Activated CD4-positive, alpha-beta T cell treated with anti-CD3 and anti-CD28 coated beads, Interleukin-2, amount 10 ng/mL, durations not matched to agents 24 days and 14 days (primary cell): ENCODE measurements at regions of chr10 and their contacts with region 1.

Region 1: DNA sequence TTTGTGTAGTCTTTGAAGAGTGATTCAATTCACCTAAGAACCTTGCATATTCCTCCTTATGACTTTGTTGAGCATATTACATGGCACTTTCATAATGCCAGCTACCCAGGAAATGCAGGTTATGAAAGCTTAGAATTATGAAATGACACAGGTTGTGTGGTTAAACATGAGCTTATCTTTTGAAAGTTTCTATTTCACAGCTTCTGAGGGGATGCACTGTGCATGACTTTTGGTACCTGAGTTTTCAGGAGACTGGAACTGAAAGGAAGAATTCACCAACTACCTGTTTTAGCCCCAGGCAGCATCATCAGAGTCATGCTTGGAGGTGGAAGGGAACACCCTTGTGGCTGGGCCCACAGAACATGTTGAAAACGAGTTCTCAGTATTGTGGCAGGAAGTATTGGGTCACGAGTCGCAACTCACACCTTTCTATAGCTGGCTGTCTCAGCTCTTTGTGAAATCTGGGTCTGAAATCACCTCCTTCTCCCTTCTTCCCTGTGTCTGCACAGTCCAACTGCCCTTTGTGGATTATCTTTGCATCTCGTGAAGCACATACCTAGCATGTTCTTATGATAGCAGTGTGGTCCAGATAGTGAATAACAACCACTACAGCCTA is 228.2 kb downstream of the PTEN start:
- DNase-seq: peak; percentile 92
- H3K4me3 Mint-ChIP-seq: no peak overlapping the region
- H3K27ac Mint-ChIP-seq: peak overlapping the region; percentile 56
- H3K4me1 Mint-ChIP-seq: peaks cover 30% of the 10 kb centered on the region
- H3K27me3 Mint-ChIP-seq: peaks cover 46% of the 10 kb centered on the region

Region 2: GRCh38 chr10:88064608-88065382 is 26.8 kb before region 1 on chr10:
- intact Hi-C with region 1: loop called (anchors 1 kb)
- DNase-seq: peak; percentile 72
- H3K4me3 Mint-ChIP-seq: no peak overlapping the region
- H3K27ac Mint-ChIP-seq: peak overlapping the region; percentile 29
- H3K4me1 Mint-ChIP-seq: peaks cover 40% of the 10 kb centered on the region
- H3K27me3 Mint-ChIP-seq: peaks cover 8% of the 10 kb centered on the region

Region 3: DNA sequence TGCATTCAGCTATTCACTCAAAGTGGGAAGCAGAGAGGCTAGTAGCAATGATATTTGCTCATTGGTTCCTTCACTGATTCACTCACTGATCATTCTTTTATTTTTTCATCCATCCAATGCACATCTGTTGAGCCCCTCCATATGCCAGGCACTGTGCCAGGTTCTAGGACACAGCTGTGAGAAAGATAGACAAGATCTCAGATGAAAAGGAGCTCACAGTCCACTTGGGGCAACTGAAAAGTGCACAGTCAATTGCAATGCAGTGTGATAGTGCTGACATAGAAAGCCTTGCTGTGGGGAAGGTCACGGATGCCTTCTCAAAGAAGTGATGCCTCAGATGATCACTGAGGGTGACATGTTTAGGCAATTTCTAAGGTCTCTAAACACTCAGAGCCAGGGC is 34.2 kb after region 1 on chr10:
- intact Hi-C with region 1: no loop called
- DNase-seq: peak; percentile 31
- H3K4me3 Mint-ChIP-seq: no peak overlapping the region
- H3K27ac Mint-ChIP-seq: no peak overlapping the region
- H3K4me1 Mint-ChIP-seq: peaks cover 4% of the 10 kb centered on the region
- H3K27me3 Mint-ChIP-seq: peaks cover 26% of the 10 kb centered on the region

Region 4: GRCh38 chr10:88138319-88138848 is 46.8 kb after region 1 on chr10:
- intact Hi-C with region 1: loop called (anchors 1 kb)
- DNase-seq: peak; percentile 69
- H3K4me3 Mint-ChIP-seq: peak overlapping the region; percentile 36
- H3K27ac Mint-ChIP-seq: peak overlapping the region; percentile 38
- H3K4me1 Mint-ChIP-seq: peaks cover 13% of the 10 kb centered on the region
- H3K27me3 Mint-ChIP-seq: peaks cover 12% of the 10 kb centered on the region

Region 5: DNA sequence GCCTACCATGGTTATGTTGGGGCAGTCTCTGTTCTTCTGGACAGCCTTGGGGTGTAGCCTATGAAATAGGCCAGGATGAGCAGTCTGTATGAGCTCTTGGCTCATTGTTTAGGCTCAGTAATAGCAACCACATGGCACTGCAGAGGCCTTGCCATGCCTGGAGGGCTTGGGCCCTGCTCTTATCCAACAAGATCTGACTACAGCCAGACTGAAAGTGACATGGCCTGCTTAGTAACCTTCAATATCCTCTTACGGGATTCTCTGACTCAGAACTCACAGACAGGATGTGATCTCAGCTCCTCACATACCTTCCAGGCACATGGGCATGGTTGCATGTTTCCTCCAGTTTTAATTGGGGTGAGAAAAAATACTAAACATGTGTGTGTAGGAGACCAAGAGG is 61.1 kb after region 1 on chr10:
- intact Hi-C with region 1: loop called (anchors 1 kb)
- DNase-seq: peak; percentile 83
- H3K4me3 Mint-ChIP-seq: peak overlapping the region; percentile 57
- H3K27ac Mint-ChIP-seq: peak overlapping the region; percentile 91
- H3K4me1 Mint-ChIP-seq: peaks cover 20% of the 10 kb centered on the region
- H3K27me3 Mint-ChIP-seq: no peaks in the 10 kb centered on the region

Region 6: GRCh38 chr10:88194041-88194887 is 102.7 kb after region 1 on chr10:
- intact Hi-C with region 1: loop called (anchors 1 kb)
- DNase-seq: peak; percentile 85
- H3K4me3 Mint-ChIP-seq: peak overlapping the region; percentile 39
- H3K27ac Mint-ChIP-seq: peak overlapping the region; percentile 79
- H3K4me1 Mint-ChIP-seq: peaks cover 25% of the 10 kb centered on the region
- H3K27me3 Mint-ChIP-seq: peaks cover 2% of the 10 kb centered on the region